ENCODE measurements at regions of chr7 and their contacts with region 1.

Region 1: GRCh38 chr7:116236020-116236630 is 25.8 kb downstream of the TES start:
- DNase-seq: peak; percentile 27
- CTCF ChIP-seq: peak; percentile 47

Region 2: DNA sequence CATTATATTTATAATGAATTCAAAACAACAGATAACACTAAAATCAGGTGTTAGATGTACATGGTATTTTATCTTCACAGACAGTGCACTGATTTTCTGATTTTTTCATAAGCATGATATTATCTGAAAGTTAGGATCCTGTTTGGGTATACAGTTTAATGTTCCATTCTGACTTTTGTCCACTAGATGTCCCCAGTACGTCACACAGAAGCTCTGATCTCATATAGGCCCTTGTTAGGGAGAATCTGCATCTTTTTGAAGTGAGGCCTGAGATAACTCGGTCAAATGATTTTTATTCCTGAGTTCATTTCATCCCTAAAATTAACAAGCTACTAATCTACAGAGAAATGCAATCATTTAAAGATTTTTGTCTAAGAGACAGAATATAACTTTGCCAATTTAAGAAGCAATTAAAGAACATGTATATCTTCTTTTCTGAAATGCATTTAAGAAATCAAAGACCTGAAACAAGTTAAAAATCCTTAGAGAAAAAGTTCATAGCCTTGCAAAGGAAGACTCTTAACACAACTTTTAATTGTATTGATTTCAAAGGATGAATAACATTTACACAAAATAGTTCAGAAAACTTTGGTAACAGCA is 97.8 kb before region 1 on chr7:
- in situ Hi-C with region 1: loop called (anchors 25 kb)
- DNase-seq: peak; percentile 36
- CTCF ChIP-seq: peak; percentile 67

Region 3: GRCh38 chr7:116173051-116174028 is 62.8 kb before region 1 on chr7:
- in situ Hi-C with region 1: loop called (anchors 5 kb)
- DNase-seq: peak; percentile 29
- CTCF ChIP-seq: peak; percentile 52